CD8-positive, alpha-beta T cell (primary cell): ENCODE measurements at regions of chr3 and their contacts with region 1.

Region 1: DNA sequence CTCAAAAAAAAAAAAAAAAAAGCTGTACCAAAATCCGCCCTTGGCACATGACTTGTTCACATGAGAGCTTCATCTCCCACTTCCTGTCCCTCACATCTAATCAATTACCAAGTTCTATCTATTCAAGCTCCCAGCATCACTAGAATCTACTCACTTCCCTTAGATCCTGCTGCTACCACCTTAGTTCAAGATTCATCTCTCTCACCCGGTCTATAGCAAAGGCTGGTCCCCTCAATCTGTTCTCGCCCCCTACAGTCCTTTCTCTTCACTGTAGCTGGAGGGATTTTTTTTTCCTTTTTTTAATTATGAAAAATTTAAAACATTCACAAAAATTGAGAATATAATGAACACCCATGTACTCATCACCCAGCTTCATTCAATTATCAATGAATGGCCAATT is 16.7 kb upstream of the GPR160 start:
- DNase-seq: peak in 1 of 9 experiments; percentile 16
- ATAC-seq: no peak
- H3K4me3 ChIP-seq: no peak overlapping the region
- H3K4me3 Mint-ChIP-seq: no peak overlapping the region
- H3K27ac ChIP-seq: no peak overlapping the region
- H3K27ac Mint-ChIP-seq: no peak overlapping the region
- H3K4me1 ChIP-seq: peaks cover under 1% of the 10 kb centered on the region
- H3K4me1 Mint-ChIP-seq: peaks cover 2% of the 10 kb centered on the region
- H3K27me3 ChIP-seq: no peaks in the 10 kb centered on the region
- H3K27me3 Mint-ChIP-seq: peaks cover 3% of the 10 kb centered on the region
- CTCF ChIP-seq: no peak

Region 2: GRCh38 chr3:169980055-169980454 is 41.0 kb before region 1 on chr3:
- CTCF ChIA-PET with region 1: no interaction called
- POLR2A ChIA-PET with region 1: no interaction called
- intact Hi-C with region 1: loop called in 1 of 2 experiments (anchors 5 kb)
- DNase-seq: no peak
- ATAC-seq: no peak
- H3K4me3 ChIP-seq: no peak overlapping the region
- H3K4me3 Mint-ChIP-seq: no peak overlapping the region
- H3K27ac ChIP-seq: no peak overlapping the region
- H3K27ac Mint-ChIP-seq: no peak overlapping the region
- H3K4me1 ChIP-seq: no peaks in the 10 kb centered on the region
- H3K4me1 Mint-ChIP-seq: peaks cover 8% of the 10 kb centered on the region
- H3K27me3 ChIP-seq: no peaks in the 10 kb centered on the region
- H3K27me3 Mint-ChIP-seq: no peaks in the 10 kb centered on the region
- CTCF ChIP-seq: no peak